ENCODE measurements at regions of chr15 and their contacts with region 1.

Region 1: DNA sequence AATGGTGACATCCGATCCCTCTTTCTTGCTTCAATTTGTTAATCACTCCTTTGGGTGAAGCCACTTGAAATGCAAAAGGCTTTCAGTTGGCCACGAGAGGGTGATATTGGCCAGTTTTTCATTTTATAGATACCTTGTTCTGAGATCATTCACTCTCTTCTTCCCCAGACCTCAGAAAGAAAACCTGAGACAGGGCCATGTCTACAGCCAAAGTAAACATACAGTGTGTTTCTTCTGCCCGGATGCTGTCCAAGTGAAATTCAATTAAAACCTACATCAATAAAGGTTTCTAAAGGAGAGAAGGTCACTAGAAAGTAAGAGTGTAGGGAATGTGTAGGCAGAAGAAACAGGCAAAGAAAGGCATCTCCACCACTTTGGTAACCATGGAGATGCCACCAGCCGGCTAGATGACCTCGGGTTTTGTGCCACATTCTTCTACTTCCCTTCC is 39.5 kb upstream of the FMN1 start:
- DNase-seq: peak; percentile 20 to 46
- H3K4me3 ChIP-seq: no peak overlapping the region
- H3K27ac ChIP-seq: no peak overlapping the region
- H3K4me1 ChIP-seq: peaks cover 13% of the 10 kb centered on the region
- H3K27me3 ChIP-seq: no peaks in the 10 kb centered on the region
- CTCF ChIP-seq: peak; percentile 72

Region 2: GRCh38 chr15:33675246-33675645 is 441.2 kb after region 1 on chr15:
- CTCF ChIA-PET with region 1: no interaction called
- POLR2A ChIA-PET with region 1: no interaction called
- intact Hi-C with region 1: loop called (anchors 1 kb)
- DNase-seq: no peak
- H3K4me3 ChIP-seq: no peak overlapping the region
- H3K27ac ChIP-seq: no peak overlapping the region
- H3K4me1 ChIP-seq: no peaks in the 10 kb centered on the region
- H3K27me3 ChIP-seq: no peaks in the 10 kb centered on the region
- CTCF ChIP-seq: peak; percentile 63

Region 3: GRCh38 chr15:33700695-33701304 is 466.8 kb after region 1 on chr15:
- CTCF ChIA-PET with region 1: interaction called, 4 read pairs
- POLR2A ChIA-PET with region 1: no interaction called
- intact Hi-C with region 1: loop called (anchors 1 kb)
- DNase-seq: peak in 1 of 2 experiments; percentile 68
- H3K4me3 ChIP-seq: no peak overlapping the region
- H3K27ac ChIP-seq: no peak overlapping the region
- H3K4me1 ChIP-seq: no peaks in the 10 kb centered on the region
- H3K27me3 ChIP-seq: no peaks in the 10 kb centered on the region
- CTCF ChIP-seq: peak; percentile 85

Region 4: DNA sequence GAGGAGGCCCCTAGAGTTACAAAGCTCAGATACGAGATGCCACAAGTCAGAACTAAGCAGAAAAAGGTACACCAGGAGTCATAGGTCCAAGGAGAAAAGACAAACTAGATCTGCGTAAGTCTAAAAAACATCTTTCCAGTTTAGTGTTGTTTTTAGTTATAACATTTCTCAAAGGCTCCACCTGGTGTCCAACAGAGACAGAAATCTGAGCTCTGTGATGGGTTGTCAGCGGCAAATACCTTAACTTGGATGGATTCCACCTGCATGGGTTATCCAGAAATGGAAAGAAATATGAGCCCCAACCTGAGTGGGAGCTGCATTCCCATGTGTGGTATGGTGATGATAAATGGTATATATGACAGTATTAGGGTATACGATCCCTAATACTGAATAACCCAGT is 495.6 kb after region 1 on chr15:
- CTCF ChIA-PET with region 1: interaction called, 3 read pairs
- POLR2A ChIA-PET with region 1: no interaction called
- intact Hi-C with region 1: loop called (anchors 1 kb)
- DNase-seq: peak in 1 of 2 experiments; percentile 6
- H3K4me3 ChIP-seq: no peak overlapping the region
- H3K27ac ChIP-seq: no peak overlapping the region
- H3K4me1 ChIP-seq: no peaks in the 10 kb centered on the region
- H3K27me3 ChIP-seq: no peaks in the 10 kb centered on the region
- CTCF ChIP-seq: no peak; the same call in 1 of the 2 replicates

Measured in PC-9 (cell line).